Activated CD4-positive, alpha-beta T cell treated with anti-CD3 and anti-CD28 coated beads for 36 hours (primary cell): ENCODE measurements at regions of chr3 and their contacts with region 1.

Region 1: DNA sequence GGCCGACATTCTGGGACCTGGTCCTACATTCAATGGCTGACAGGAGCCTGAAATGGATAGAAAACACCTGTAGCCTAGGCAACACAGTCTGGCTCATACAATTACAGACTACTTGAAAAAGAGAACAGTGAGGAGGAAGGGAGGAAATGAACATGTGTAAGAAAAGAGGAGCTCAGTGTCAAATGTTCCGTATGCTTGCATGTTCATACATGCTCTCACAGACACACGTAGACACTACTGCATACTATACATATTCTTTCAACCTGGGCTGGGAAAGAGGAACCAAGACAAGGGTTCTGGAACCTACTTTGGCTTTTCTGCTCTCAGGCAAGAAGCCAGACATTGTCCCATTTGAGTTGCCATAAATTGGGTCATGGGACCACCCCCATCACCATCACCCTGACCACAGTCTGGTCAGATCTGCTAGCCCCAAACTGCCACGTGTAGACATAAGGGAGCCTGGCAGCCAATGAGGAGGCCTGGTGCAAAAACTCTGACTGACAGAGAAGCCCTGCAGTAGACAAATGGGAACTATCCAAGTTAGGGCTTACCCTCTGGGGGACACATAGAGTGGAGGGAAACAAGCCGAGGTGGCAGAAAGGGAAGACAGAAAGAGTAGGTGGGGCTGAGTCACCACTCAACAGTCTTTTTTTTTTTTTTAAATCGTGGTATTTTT is 310.0 kb downstream of the SHQ1 start:
- DNase-seq: peak; percentile 27
- ATAC-seq: peak; percentile 74
- H3K4me3 Mint-ChIP-seq: no peak overlapping the region
- H3K27ac Mint-ChIP-seq: no peak overlapping the region
- H3K4me1 Mint-ChIP-seq: peaks cover 31% of the 10 kb centered on the region
- H3K27me3 Mint-ChIP-seq: peaks cover 13% of the 10 kb centered on the region

Region 2: GRCh38 chr3:72368331-72368975 is 169.8 kb before region 1 on chr3:
- CTCF ChIA-PET with region 1: no interaction called
- POLR2A ChIA-PET with region 1: no interaction called
- intact Hi-C with region 1: no loop called
- DNase-seq: no peak
- ATAC-seq: no peak
- H3K4me3 Mint-ChIP-seq: no peak overlapping the region
- H3K27ac Mint-ChIP-seq: no peak overlapping the region
- H3K4me1 Mint-ChIP-seq: peaks cover 14% of the 10 kb centered on the region
- H3K27me3 Mint-ChIP-seq: no peaks in the 10 kb centered on the region

Region 3: GRCh38 chr3:72473156-72473555 is 65.1 kb before region 1 on chr3:
- CTCF ChIA-PET with region 1: no interaction called
- POLR2A ChIA-PET with region 1: no interaction called
- intact Hi-C with region 1: no loop called
- DNase-seq: no peak
- ATAC-seq: peak; percentile 70
- H3K4me3 Mint-ChIP-seq: no peak overlapping the region
- H3K27ac Mint-ChIP-seq: peak overlapping the region; percentile 69
- H3K4me1 Mint-ChIP-seq: peaks cover 39% of the 10 kb centered on the region
- H3K27me3 Mint-ChIP-seq: peaks cover 3% of the 10 kb centered on the region

Region 4: GRCh38 chr3:72629191-72629631 is 91.0 kb after region 1 on chr3:
- CTCF ChIA-PET with region 1: no interaction called
- POLR2A ChIA-PET with region 1: no interaction called
- intact Hi-C with region 1: loop called in 1 of 2 experiments (anchors 1 kb)
- DNase-seq: no peak
- ATAC-seq: peak; percentile 67
- H3K4me3 Mint-ChIP-seq: no peak overlapping the region
- H3K27ac Mint-ChIP-seq: peak overlapping the region; percentile 79
- H3K4me1 Mint-ChIP-seq: peaks cover 60% of the 10 kb centered on the region
- H3K27me3 Mint-ChIP-seq: no peaks in the 10 kb centered on the region